K562 (cell line): ENCODE measurements at regions of chr1 and their contacts with region 1.

Region 1: DNA sequence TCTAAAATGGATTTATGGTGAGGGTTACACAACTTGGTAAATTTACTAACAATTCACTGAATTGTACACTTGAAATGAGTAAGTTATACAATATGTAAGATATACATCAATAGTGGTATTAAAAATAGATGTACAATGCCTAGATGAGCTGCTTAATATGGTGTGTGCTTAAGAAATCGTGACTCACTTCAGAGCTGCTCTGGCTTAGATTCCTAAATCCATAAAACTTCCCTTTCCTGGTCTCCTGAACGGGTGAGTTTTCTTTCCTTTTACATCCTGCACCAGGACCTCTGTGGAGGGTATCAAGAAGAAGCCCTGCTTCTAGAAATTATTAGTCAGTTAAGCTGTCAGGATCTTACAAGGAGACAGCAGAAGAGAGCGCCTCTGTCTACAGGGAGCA is 30.4 kb downstream of the H3-3A start:
- DNase-seq: no peak
- ATAC-seq: no peak
- H3K4me3 ChIP-seq: no peak overlapping the region
- H3K27ac ChIP-seq: no peak overlapping the region
- H3K4me1 ChIP-seq: peaks cover 0 to 11% of the 10 kb centered on the region in 2 experiments; a peak in 3 of 5 replicates
- H3K27me3 ChIP-seq: no peaks in the 10 kb centered on the region
- CTCF ChIP-seq: no peak
- EP300 ChIP-seq: no peak
- POLR2A ChIP-seq: no peak
- RAD21 ChIP-seq: no peak

Region 2: GRCh38 chr1:226109829-226110248 is 16.9 kb after region 1 on chr1:
- CTCF ChIA-PET with region 1: no interaction called
- POLR2A ChIA-PET with region 1: interaction called, 6 read pairs
- in situ Hi-C with region 1: no loop called
- intact Hi-C with region 1: loop called (anchors 1 kb)
- DNase-seq: peak; percentile 93 to 99 (median 97)
- ATAC-seq: peak; percentile 77
- H3K4me3 ChIP-seq: peak overlapping the region; percentile 57
- H3K27ac ChIP-seq: peak overlapping the region; percentile 85
- H3K4me1 ChIP-seq: peaks cover 42 to 47% of the 10 kb centered on the region in 2 experiments
- H3K27me3 ChIP-seq: no peaks in the 10 kb centered on the region
- CTCF ChIP-seq: peak in 2 of 3 experiments; percentile 20 to 34; a peak in 3 of 6 replicates
- EP300 ChIP-seq: no peak
- POLR2A ChIP-seq: no peak
- RAD21 ChIP-seq: peak in 1 of 2 experiments; percentile 24; a peak in 1 of 4 replicates